Activated T-helper 2 cell treated with anti-CD3 and anti-CD28 coated beads, Interferon-gamma antibody, Interleukin-2, Interleukin-4, amounts not matched to agents 10 μg/mL and 5 μg/mL and 100 μg/mL, durations not matched to agents 14 hours and 24 hours and 36 hours (primary cell): ENCODE measurements at regions of chr11 and their contacts with region 1.

Region 1: GRCh38 chr11:76680518-76681425 is 10.2 kb upstream of the LRRC32 start:
- DNase-seq: peak; percentile 60
- H3K4me3 Mint-ChIP-seq: no peak overlapping the region
- H3K27ac Mint-ChIP-seq: no peak overlapping the region
- H3K4me1 Mint-ChIP-seq: peaks cover 40% of the 10 kb centered on the region
- H3K27me3 Mint-ChIP-seq: no peaks in the 10 kb centered on the region

Region 2: GRCh38 chr11:76380967-76381719 is 299.6 kb before region 1 on chr11 and contains the starts of genes GVQW3 and THAP12:
- intact Hi-C with region 1: loop called (anchors 5 kb)
- DNase-seq: peak; percentile 96
- H3K4me3 Mint-ChIP-seq: peak within 1 kb of the TSS; percentile 95
- H3K27ac Mint-ChIP-seq: peak within 1 kb of the TSS; percentile 89
- H3K4me1 Mint-ChIP-seq: peaks cover 49% of the 10 kb centered on the region
- H3K27me3 Mint-ChIP-seq: no peaks in the 10 kb centered on the region
- total RNA-seq, gene GVQW3: 4.3 and 4.4 TPM in 2 replicates
- total RNA-seq, gene THAP12: 63.1 and 66.0 TPM in 2 replicates

Region 3: DNA sequence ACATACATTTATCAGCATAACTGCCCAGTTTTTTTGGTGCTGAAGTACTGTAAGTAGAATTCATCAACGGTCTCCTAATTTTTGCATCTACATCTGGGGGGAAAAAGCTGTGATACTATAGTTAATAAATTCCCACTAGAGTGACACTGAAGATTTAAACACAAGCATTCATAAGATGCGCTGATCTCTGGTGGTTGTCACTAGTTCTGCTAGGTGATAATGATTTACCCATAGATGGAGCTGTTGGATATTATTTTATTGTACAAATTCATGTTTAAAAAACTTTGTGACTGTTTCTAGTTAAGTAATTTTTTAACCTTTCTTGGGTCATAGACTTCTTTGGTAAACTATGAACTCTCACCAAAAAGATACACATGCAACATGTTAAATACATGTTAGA is 129.4 kb before region 1 on chr11:
- intact Hi-C with region 1: loop called (anchors 1 kb)
- DNase-seq: no peak
- H3K4me3 Mint-ChIP-seq: no peak overlapping the region
- H3K27ac Mint-ChIP-seq: no peak overlapping the region
- H3K4me1 Mint-ChIP-seq: peaks cover 7% of the 10 kb centered on the region
- H3K27me3 Mint-ChIP-seq: no peaks in the 10 kb centered on the region

Region 4: DNA sequence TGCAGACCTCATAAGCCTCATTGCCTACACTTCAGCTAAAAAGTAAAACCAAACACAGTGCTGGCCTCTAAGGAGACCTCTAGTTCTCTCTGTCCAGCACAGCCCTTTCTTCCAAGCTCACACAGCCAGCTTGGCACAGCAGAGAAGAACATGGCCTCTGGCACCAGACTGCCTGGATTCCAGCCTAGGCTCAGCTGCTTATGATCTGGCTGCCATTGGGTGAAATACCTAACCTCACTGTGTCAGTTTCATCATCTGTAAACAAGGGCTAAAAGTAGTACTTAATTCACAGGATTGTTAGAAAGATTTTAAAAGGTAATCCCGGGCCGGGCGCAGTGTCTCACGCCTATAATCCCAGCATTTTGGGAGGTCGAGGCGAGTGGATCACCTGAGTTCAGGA is 170.0 kb after region 1 on chr11:
- intact Hi-C with region 1: no loop called
- DNase-seq: no peak
- H3K4me3 Mint-ChIP-seq: no peak overlapping the region
- H3K27ac Mint-ChIP-seq: no peak overlapping the region
- H3K4me1 Mint-ChIP-seq: peaks cover 4% of the 10 kb centered on the region
- H3K27me3 Mint-ChIP-seq: peaks cover 17% of the 10 kb centered on the region

Region 5: DNA sequence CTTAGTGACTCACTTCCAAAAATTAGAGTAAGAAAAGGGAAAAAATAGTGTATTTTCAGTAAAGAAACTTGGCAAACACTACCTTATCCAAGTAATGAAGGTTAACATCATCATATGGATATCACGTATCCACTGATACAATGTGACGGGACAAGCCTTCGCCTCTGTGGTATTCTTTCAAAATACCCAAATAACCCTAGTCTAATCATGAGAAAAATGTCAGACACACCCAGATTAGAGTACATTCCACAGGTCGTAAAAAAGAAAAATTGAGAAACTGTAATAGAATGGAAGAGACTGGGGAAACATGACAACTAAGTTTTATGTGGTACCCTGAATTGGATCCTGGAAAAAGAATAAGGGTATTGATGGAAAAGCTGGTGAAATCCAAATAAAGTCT is 1844.9 kb after region 1 on chr11:
- intact Hi-C with region 1: no loop called
- DNase-seq: no peak
- H3K4me3 Mint-ChIP-seq: no peak overlapping the region
- H3K27ac Mint-ChIP-seq: no peak overlapping the region
- H3K4me1 Mint-ChIP-seq: peaks cover 1% of the 10 kb centered on the region
- H3K27me3 Mint-ChIP-seq: no peaks in the 10 kb centered on the region